Naive thymus-derived CD4-positive, alpha-beta T cell (primary cell): ENCODE measurements at regions of chr5 and their contacts with region 1.

Region 1: DNA sequence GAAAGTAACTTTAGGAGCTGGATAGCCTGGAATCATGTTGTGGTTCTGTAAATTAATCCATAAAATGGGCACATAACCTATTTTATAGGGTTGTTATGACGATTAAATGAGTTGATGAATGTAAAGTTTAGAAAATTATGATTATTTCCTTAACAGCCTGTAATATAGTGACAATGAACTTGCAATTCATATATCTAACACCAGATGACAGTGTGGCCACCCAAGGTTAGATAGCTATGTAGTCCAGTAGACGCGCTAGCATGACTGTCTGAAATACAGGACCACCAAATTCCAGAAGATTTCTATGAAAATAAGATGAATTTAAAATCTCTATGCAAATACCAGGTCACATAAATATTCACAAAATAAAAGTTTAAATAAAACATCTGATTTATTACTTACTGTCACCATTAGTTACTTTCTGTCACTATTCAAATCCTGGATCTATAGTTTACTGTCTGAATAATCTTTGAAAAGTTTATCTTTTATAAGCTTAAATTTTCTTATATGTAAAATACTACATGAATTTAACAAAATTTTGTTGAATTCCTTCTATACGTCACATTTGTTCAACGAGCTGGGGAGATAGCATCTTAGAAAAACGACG is 26.1 kb upstream of the MACIR start:
- DNase-seq: peak in 7 of 9 donors; percentile 14 to 38 (median 23)
- ATAC-seq: peak; percentile 81
- H3K4me3 ChIP-seq: no peak overlapping the region
- H3K4me3 Mint-ChIP-seq: no peak overlapping the region
- H3K27ac ChIP-seq: no peak overlapping the region
- H3K27ac Mint-ChIP-seq: no peak overlapping the region
- H3K4me1 ChIP-seq: no peaks in the 10 kb centered on the region
- H3K4me1 Mint-ChIP-seq: no peaks in the 10 kb centered on the region
- H3K27me3 ChIP-seq: no peaks in the 10 kb centered on the region
- H3K27me3 Mint-ChIP-seq: peaks cover 2 to 41% (median 14%) of the 10 kb centered on the region in 5 donors

Region 2: DNA sequence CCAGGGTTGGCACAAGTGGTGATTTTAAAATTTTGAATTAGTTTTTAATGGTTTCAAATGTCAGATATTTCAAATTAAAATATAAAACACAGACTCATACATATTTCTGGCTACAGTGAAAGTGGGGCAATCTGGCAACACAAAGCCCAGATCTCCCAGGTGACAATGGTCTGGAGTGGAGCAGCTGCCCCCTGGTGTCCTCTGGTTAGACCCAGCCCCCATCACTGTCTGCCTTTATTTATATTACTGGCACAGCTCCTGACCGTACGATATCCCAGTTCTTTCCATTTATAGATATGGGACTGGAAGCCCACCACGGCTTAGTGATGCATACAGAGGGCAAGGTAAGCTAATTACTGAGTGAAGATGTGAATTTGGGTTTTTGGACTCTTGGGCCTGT is 63.4 kb after region 1 on chr5:
- CTCF ChIA-PET with region 1: interaction called, 3 read pairs
- POLR2A ChIA-PET with region 1: no interaction called
- intact Hi-C with region 1: loop called in 1 of 2 experiments (anchors 1 kb)
- DNase-seq: no peak
- ATAC-seq: no peak
- H3K4me3 ChIP-seq: no peak overlapping the region
- H3K4me3 Mint-ChIP-seq: no peak overlapping the region
- H3K27ac ChIP-seq: no peak overlapping the region
- H3K27ac Mint-ChIP-seq: no peak overlapping the region
- H3K4me1 ChIP-seq: no peaks in the 10 kb centered on the region
- H3K4me1 Mint-ChIP-seq: no peaks in the 10 kb centered on the region
- H3K27me3 ChIP-seq: no peaks in the 10 kb centered on the region
- H3K27me3 Mint-ChIP-seq: peaks cover 0 to 18% (median 13%) of the 10 kb centered on the region in 5 donors

Region 3: GRCh38 chr5:103475629-103476240 is 243.2 kb after region 1 on chr5:
- CTCF ChIA-PET with region 1: interaction called, 40 read pairs
- POLR2A ChIA-PET with region 1: no interaction called
- intact Hi-C with region 1: loop called in 1 of 2 experiments (anchors 1 kb)
- DNase-seq: peak in 5 of 9 donors; percentile 11 to 33 (median 18)
- ATAC-seq: peak; percentile 49
- H3K4me3 ChIP-seq: no peak overlapping the region
- H3K4me3 Mint-ChIP-seq: no peak overlapping the region
- H3K27ac ChIP-seq: no peak overlapping the region
- H3K27ac Mint-ChIP-seq: no peak overlapping the region
- H3K4me1 ChIP-seq: no peaks in the 10 kb centered on the region
- H3K4me1 Mint-ChIP-seq: no peaks in the 10 kb centered on the region
- H3K27me3 ChIP-seq: no peaks in the 10 kb centered on the region
- H3K27me3 Mint-ChIP-seq: peaks cover 11 to 22% (median 16%) of the 10 kb centered on the region in 5 donors